ENCODE measurements at regions of chr1 and their contacts with region 1.

Region 1: DNA sequence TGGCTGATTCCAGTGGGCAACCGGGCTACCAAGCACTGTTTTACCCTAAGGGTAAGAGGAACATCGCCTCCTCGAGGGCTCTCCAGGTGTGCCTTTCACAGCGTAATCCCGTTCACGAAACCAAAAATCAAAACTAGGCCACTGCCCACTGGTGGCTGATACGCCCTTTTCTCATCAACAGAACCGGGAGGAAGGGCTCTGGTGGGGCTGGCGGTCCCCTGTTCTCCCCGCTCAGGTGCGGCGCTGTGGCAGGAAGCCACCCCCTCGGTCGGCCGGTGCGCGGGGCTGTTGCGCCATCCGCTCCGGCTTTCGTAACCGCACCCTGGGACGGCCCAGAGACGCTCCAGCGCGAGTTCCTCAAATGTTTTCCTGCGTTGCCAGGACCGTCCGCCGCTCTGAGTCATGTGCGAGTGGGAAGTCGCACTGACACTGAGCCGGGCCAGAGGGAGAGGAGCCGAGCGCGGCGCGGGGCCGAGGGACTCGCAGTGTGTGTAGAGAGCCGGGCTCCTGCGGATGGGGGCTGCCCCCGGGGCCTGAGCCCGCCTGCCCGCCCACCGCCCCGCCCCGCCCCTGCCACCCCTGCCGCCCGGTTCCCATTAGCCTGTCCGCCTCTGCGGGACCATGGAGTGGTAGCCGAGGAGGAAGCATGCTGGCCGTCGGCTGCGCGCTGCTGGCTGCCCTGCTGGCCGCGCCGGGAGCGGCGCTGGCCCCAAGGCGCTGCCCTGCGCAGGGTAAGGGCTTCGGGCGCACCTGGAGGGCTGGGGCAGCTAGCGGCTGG is at the start of gene IL6R:
- DNase-seq: peak; percentile 80 to 84
- H3K4me3 ChIP-seq: peak within 1 kb of the TSS; percentile 3 to 75 (median 33)
- H3K27ac ChIP-seq: peak within 1 kb of the TSS; percentile 79 to 97 (median 94)
- H3K4me1 ChIP-seq: peaks cover 25 to 31% of the 10 kb centered on the region in 2 donors
- H3K27me3 ChIP-seq: no peaks in the 10 kb centered on the region
- CTCF ChIP-seq: peak in 5 of 6 experiments; percentile 19 to 51 (median 32)
- POLR2A ChIP-seq: peak in 1 of 2 donors; percentile 69
- total RNA-seq, gene IL6R: 4.4 to 15.3 (median 7.4) TPM

Region 2: GRCh38 chr1:154352581-154353459 is 52.4 kb before region 1 on chr1:
- intact Hi-C with region 1: loop called (anchors 10 kb)
- DNase-seq: peak; percentile 68 to 74
- H3K4me3 ChIP-seq: peak overlapping the region in 1 of 3 donors; percentile 18
- H3K27ac ChIP-seq: peak overlapping the region in 1 of 3 donors; percentile 32
- H3K4me1 ChIP-seq: peaks cover 6 to 15% of the 10 kb centered on the region in 2 donors
- H3K27me3 ChIP-seq: no peaks in the 10 kb centered on the region
- CTCF ChIP-seq: no peak
- POLR2A ChIP-seq: peak in 1 of 2 donors; percentile 24

Region 3: GRCh38 chr1:154546264-154547063 is 141.3 kb after region 1 on chr1:
- intact Hi-C with region 1: loop called (anchors 10 kb)
- DNase-seq: peak; percentile 58 to 66
- H3K4me3 ChIP-seq: no peak overlapping the region
- H3K27ac ChIP-seq: no peak overlapping the region
- H3K4me1 ChIP-seq: peaks cover 0 to 4% of the 10 kb centered on the region in 2 donors
- H3K27me3 ChIP-seq: no peaks in the 10 kb centered on the region
- CTCF ChIP-seq: peak; percentile 53 to 82 (median 72)
- POLR2A ChIP-seq: no peak

Measured in thyroid gland (tissue), 4 donors.